ENCODE measurements at regions of chr2 and their contacts with region 1.

Region 1: DNA sequence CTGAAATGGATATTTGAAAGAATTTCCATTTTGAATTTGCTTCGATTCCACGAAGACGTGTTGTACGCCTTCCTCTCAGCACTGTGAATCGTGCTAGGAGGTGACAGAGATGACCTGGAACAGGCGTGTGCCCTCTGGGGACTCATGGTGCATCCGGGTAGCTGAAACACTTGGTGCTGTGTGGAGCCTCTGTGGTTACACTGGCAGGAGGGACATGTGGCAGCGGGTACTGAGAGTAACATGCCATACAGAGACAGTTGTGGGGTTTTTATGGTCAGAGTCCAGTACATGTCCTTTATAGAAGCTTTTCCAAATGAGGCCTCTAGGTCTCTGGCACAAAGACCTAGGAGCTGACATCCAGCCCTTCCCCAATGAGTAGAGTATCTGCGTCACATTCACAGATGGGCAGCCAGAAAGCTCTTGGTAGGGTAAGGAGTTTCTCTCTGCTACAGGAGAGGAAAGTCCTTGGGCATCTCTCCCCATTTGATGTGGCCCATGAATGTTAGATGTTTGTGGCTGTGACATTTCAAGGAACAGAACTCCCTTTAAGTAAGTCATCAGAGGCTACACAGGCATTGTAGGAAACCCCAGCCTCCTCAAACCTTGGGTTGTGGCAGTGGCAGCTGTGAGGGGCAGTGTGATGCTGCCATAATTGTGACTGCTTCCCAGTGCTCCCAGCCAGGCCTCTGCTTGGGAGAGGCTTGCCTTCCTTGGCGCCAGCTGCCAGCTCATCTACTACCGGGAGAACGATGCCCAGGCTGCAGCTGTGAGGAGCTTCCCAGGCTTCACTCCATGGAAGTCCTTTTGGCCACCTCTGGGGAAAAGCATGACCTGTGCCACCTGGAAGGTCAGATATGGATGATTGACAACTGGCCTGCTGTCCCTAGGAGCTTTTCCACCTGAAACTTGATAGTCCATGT is 80.6 kb downstream of the ACOXL start:
- DNase-seq: no peak
- ATAC-seq: no peak

Region 2: GRCh38 chr2:110777531-110778311 is 35.3 kb before region 1 on chr2:
- intact Hi-C with region 1: loop called (anchors 5 kb)
- DNase-seq: no peak
- ATAC-seq: no peak

Region 3: DNA sequence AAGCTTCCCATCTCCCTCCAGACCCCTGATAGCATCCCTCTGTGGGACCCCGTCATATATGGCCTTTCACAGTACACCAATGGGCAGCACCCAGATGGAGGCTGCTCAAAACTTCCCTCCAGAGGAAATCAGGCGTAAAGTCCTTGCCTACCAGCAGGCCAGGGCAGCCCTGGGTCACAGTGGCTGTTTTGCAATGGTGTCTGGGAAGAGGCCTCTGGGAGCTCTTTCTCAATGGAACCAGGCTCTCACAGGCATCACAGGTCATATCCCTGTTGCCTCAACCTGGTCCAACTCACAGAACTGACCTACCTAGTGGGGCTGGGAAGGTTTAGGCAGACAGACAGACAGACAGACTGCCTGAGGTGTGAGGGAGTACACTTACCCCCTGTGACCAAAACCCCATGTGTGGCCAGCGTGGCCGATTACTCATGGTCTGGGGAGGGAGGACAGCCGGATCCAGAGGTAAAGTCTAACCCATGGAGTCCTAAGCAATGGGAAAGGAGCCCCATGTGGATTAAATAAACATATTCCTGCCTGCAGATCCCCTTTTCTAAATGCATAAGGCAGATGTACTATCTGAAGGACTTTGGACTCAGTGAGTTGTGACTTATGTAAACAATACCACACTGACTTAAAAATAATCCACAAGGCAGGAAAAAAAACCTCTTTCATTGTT is 365.9 kb after region 1 on chr2:
- intact Hi-C with region 1: no loop called
- DNase-seq: no peak
- ATAC-seq: no peak